H1 (cell line): ENCODE measurements at regions of chr17 and their contacts with region 1.

Region 1: DNA sequence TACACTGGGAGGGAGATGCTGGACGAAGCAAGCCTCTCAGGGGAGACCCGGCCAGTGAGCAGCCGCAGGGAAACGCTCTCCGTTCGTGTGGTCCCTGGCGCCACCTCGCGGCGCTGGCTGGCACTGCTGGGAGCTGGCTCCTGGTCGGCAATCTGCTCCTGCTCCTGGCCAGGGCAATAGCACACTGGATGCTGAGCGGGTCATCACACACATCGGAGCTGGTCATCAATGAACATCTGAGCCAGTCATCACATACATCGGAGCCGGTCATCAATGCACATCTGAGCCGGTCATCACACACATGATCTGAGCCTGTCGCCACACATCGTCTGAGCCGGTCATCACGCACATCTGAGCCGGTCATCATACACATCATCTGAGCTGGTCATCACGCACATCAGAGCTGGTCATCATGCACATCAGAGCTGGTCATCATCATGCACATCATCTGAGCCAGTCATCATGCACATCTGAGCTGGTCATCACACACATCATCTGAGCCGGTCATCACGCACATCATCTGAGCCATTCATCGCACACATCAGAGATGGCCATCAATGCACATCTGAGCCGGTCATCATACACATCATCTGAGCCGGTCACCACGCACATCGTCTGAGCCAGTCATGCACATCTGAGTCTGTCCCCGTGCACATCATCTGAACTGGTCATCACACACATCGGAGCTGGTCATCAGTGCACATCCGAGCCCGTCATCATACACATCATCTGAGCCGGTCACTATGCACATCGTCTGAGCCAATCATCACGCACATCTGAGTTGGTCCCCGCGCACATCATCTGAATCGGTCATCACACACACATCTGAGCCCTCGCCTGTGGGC is 217.3 kb downstream of the RBFOX3 start:
- DNase-seq: peak; percentile 57 to 99
- H3K4me3 ChIP-seq: no peak overlapping the region
- H3K27ac ChIP-seq: no peak overlapping the region
- H3K4me1 ChIP-seq: no peaks in the 10 kb centered on the region; a peak in 2 of 7 replicates
- H3K27me3 ChIP-seq: peaks cover 2 to 16% (median 7%) of the 10 kb centered on the region in 4 experiments
- CTCF ChIP-seq: peak; percentile 98 to 100 (median 100)
- EP300 ChIP-seq: no peak
- POLR2A ChIP-seq: no peak
- RAD21 ChIP-seq: peak; percentile 98 to 99

Region 2: DNA sequence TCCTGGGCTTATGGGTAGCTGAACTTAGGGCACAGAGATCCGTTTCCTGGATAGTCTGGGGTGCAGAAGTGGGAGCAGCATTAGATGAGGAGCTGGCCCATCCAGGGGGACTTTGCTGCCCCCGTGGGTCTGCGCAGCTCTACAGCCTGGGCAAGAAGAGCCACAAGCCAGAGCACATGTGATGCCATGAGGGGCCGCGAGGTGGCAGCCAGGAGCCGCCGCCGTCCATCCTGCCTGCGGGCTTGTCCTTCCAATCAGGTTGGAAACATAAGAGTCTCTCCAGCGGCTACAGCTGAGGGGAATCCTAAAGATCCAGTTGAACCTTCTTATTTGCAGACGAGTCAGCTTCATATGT is 347.8 kb before region 1 on chr17:
- CTCF ChIA-PET with region 1: interaction called, 37 read pairs
- POLR2A ChIA-PET with region 1: no interaction called
- DNase-seq: peak; percentile 41 to 91
- H3K4me3 ChIP-seq: no peak overlapping the region
- H3K27ac ChIP-seq: no peak overlapping the region
- H3K4me1 ChIP-seq: no peaks in the 10 kb centered on the region
- H3K27me3 ChIP-seq: peaks cover 0 to 2% (median 0%) of the 10 kb centered on the region in 4 experiments; a peak in 4 of 7 replicates
- CTCF ChIP-seq: peak; percentile 95 to 96 (median 95)
- EP300 ChIP-seq: no peak
- POLR2A ChIP-seq: no peak
- RAD21 ChIP-seq: peak; percentile 76 to 82

Region 3: GRCh38 chr17:79095345-79096055 is 298.1 kb before region 1 on chr17:
- CTCF ChIA-PET with region 1: interaction called, 291 read pairs
- POLR2A ChIA-PET with region 1: no interaction called
- DNase-seq: no peak
- H3K4me3 ChIP-seq: no peak overlapping the region
- H3K27ac ChIP-seq: no peak overlapping the region
- H3K4me1 ChIP-seq: peaks cover 0 to 16% (median 5%) of the 10 kb centered on the region in 4 experiments; a peak in 5 of 7 replicates
- H3K27me3 ChIP-seq: no peaks in the 10 kb centered on the region
- CTCF ChIP-seq: no peak
- EP300 ChIP-seq: no peak
- POLR2A ChIP-seq: no peak
- RAD21 ChIP-seq: no peak

Region 4: GRCh38 chr17:79174905-79175856 is 218.4 kb before region 1 on chr17:
- CTCF ChIA-PET with region 1: interaction called, 19 read pairs
- POLR2A ChIA-PET with region 1: interaction called, 3 read pairs
- DNase-seq: no peak
- H3K4me3 ChIP-seq: no peak overlapping the region
- H3K27ac ChIP-seq: no peak overlapping the region
- H3K4me1 ChIP-seq: peaks cover 0 to 3% (median 0%) of the 10 kb centered on the region in 4 experiments; a peak in 2 of 7 replicates
- H3K27me3 ChIP-seq: no peaks in the 10 kb centered on the region
- CTCF ChIP-seq: no peak
- EP300 ChIP-seq: no peak
- POLR2A ChIP-seq: no peak
- RAD21 ChIP-seq: no peak

Region 5: DNA sequence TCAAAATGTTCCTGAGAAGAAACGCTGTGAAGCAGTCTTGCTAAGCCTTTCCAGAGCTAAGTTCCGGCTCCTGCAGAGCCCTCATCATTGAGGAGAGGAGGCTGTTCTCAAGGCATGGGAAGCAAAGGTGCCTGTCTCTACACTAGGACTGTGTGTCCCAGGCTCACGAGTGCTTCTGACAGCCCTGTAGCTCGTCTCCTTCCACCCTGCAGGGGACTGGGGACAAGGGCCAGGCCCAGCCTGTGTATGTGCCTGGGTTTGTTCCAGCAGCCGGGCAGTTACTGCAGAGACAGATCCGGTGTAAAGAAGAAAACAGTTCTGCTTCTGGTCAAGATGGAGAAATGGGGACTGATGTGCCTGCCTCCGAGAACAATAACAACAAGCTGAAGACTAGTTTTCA is 163.0 kb before region 1 on chr17:
- CTCF ChIA-PET with region 1: interaction called, 11 read pairs
- POLR2A ChIA-PET with region 1: no interaction called
- DNase-seq: no peak
- H3K4me3 ChIP-seq: no peak overlapping the region
- H3K27ac ChIP-seq: no peak overlapping the region
- H3K4me1 ChIP-seq: peaks cover 0 to 2% (median 0%) of the 10 kb centered on the region in 4 experiments; a peak in 2 of 7 replicates
- H3K27me3 ChIP-seq: no peaks in the 10 kb centered on the region
- CTCF ChIP-seq: no peak
- EP300 ChIP-seq: no peak
- POLR2A ChIP-seq: no peak
- RAD21 ChIP-seq: no peak

Region 6: DNA sequence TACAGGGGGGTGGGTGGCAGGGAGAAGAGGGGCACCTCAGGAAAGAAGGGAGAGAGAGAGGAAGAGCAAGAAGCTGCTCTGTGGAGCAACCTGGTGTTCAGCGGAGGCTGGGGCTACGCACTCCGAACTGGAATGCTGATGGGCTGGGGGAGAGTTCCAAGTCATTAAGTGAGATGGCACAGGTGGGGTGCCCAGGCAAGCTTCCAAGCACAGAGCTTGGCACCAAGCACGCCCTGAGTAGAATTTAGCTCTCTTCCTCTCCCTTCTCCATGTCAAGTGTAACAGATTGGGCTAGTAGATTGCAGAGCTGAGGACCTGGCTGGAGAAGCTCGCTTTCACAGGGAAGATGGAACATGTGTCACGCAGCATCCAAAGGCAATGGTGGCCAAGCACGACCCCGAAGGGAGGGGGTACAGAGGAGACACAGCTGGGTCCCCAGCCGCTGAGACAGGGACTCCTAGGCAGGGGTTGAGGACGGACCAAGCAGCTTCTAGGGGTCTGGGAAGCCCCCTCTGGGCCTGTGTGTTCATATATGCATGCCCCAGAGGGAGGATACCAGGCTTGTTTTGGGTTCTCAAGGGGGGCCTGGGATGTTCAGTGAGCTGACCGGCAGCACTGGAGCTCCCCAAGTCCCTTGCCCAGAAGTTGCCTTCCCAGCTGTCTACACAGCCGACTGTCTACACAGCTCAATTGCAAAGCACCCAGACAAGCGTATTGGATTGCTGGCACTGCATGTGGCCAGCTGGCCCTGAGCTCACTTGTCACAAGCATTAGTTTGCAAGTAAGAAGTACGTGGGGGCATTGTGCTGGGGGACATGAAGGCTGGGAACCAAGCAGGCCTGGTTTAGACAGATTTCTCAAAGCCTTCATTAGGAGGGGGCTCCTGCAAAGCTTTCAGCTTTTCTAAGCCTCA is 71.1 kb before region 1 on chr17:
- CTCF ChIA-PET with region 1: interaction called, 12 read pairs
- POLR2A ChIA-PET with region 1: no interaction called
- DNase-seq: no peak
- H3K4me3 ChIP-seq: no peak overlapping the region
- H3K27ac ChIP-seq: no peak overlapping the region
- H3K4me1 ChIP-seq: no peaks in the 10 kb centered on the region
- H3K27me3 ChIP-seq: peaks cover 0 to 2% (median under 1%) of the 10 kb centered on the region in 4 experiments; a peak in 1 of 7 replicates
- CTCF ChIP-seq: no peak
- EP300 ChIP-seq: no peak
- POLR2A ChIP-seq: no peak
- RAD21 ChIP-seq: no peak

Region 7: DNA sequence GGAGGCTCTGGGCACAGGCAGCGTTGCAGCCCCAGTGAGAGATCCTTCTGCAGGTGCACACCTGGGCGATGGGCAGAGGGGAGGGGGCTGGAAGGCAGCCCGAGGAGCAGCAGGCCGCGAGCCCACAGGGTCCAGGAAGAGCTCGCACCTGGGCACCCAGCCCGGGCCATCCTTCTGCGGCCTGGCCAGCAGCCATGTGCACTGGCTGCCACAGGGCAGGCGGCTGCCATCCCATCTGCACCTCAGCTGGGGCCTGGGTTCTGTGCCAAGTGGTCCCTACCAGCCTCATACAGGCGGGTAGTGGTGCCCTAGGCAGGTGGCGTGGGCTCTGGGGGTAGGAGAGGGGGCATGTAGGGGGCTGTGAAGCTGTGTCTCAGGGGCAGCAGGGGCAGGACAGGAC is 20.0 kb after region 1 on chr17:
- CTCF ChIA-PET with region 1: interaction called, 10 read pairs
- POLR2A ChIA-PET with region 1: no interaction called
- DNase-seq: no peak
- H3K4me3 ChIP-seq: no peak overlapping the region
- H3K27ac ChIP-seq: no peak overlapping the region
- H3K4me1 ChIP-seq: peaks cover 0 to 9% (median 3%) of the 10 kb centered on the region in 4 experiments; a peak in 4 of 7 replicates
- H3K27me3 ChIP-seq: no peaks in the 10 kb centered on the region
- CTCF ChIP-seq: no peak
- EP300 ChIP-seq: no peak
- POLR2A ChIP-seq: no peak
- RAD21 ChIP-seq: no peak